GM10248 (cell line): ENCODE measurements at regions of chr17 and their contacts with region 1.

Region 1: DNA sequence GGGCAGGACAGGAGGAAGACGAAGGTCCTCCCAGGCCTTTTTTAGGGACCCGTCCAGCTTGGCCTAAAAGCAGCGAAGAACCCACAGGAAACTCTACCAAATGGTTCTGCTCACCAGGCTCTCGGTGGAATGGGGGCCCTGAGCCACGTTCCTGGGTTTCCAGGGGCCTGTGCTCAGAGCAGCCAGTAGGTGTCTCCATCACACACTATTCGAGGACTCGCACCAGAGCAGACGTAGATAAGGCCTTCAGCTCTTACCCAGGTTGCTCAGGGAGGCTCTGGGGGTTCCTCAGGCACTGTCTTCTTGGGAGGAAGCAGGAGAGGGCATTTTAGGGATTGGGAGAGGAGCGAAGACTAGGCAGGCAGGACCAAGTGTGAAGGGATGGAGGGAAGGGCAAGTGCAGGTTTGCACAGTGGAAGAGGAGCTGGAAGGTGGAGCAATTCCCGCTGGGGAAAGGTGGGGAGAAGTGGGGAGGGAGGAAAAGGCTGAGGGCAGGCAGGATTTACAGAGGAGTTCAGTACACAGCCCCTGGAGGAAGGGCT is 157.1 kb downstream of the RGS9 start:
- DNase-seq: peak; percentile 76
- CTCF ChIP-seq: peak; percentile 63

Region 2: GRCh38 chr17:65988081-65988850 is 694.0 kb after region 1 on chr17:
- CTCF ChIA-PET with region 1: interaction called, 11 read pairs
- POLR2A ChIA-PET with region 1: no interaction called
- DNase-seq: no peak
- CTCF ChIP-seq: peak; percentile 41

Region 3: DNA sequence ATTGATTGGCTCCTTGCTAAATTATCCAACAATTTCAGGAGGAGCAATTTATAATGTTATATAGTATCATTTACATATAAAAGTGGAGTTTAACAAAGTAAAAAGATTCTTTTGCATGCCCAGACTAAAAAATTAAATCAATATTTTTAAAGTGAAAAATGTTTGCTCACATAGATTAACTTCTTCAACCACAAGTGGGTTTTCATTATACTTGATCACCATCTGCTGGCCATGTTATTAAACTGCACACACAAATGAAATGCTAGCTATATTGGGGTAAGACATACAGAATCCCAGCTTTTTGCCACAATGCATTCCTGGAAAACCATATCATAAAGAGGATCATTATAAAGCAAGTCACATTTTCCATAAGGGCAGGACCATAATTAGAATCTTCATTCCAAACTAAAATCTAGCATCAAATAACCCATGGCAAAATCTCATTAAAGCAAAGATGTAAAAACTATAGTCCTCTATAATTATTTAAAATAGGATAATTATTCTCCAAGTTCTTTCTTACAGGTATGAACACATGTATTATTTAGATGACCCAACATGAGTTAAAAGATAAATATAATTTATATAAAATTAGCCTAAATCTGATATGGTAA is 871.4 kb after region 1 on chr17:
- CTCF ChIA-PET with region 1: interaction called, 58 read pairs
- POLR2A ChIA-PET with region 1: no interaction called
- DNase-seq: peak; percentile 44
- CTCF ChIP-seq: peak; percentile 53